ENCODE measurements at regions of chr13 and their contacts with region 1.

Region 1: GRCh38 chr13:37173214-37173613 is 67.8 kb upstream of the CSNK1A1L start:
- DNase-seq: no peak
- H3K4me3 ChIP-seq: no peak overlapping the region
- H3K27ac ChIP-seq: no peak overlapping the region
- H3K4me1 ChIP-seq: no peaks in the 10 kb centered on the region
- H3K27me3 ChIP-seq: no peaks in the 10 kb centered on the region
- CTCF ChIP-seq: no peak

Region 2: DNA sequence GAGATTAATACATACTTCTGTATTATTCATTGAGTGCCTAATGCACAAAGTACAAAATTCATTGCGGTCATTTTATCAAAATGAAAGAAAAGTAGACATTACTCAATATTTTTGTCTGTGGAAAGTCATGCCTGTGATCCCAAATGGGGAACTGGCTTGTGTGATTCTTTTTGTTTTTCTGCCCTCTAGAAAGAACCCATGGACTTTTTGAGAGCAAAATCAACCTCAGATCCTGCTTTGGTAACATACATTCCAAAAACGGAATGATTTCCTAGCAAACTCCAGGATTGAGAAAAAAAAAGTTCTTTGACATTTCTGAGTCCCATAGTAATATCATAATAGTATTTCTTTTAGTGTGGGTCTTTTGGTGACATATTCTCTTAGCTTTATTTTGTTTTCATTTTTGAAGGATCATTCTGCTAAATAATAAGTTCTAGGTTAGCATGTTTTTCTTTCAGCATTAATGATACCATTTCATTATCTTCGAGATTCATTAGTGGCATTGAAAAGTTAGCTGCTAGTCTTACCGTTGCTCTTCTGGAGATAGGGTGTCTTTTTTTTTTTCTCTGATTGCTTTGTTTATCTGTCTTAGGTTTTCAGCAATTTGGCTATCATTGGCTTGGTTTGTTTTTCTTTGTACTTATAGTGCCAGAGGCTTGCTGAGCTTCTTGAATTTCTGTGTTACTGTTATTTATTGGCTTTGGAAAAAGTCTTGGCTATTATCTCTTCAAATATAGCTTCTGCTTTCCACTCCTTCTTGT is 34.7 kb after region 1 on chr13:
- intact Hi-C with region 1: loop called (anchors 1 kb)
- DNase-seq: no peak
- H3K4me3 ChIP-seq: peak overlapping the region in 1 of 2 donors; percentile 3
- H3K27ac ChIP-seq: peak overlapping the region; percentile 10 to 21
- H3K4me1 ChIP-seq: peaks cover 0 to 16% (median 0%) of the 10 kb centered on the region in 4 donors
- H3K27me3 ChIP-seq: no peaks in the 10 kb centered on the region
- CTCF ChIP-seq: no peak

Measured in tibial artery (tissue), 4 donors.